ENCODE measurements at regions of chr12 and their contacts with region 1.

Region 1: DNA sequence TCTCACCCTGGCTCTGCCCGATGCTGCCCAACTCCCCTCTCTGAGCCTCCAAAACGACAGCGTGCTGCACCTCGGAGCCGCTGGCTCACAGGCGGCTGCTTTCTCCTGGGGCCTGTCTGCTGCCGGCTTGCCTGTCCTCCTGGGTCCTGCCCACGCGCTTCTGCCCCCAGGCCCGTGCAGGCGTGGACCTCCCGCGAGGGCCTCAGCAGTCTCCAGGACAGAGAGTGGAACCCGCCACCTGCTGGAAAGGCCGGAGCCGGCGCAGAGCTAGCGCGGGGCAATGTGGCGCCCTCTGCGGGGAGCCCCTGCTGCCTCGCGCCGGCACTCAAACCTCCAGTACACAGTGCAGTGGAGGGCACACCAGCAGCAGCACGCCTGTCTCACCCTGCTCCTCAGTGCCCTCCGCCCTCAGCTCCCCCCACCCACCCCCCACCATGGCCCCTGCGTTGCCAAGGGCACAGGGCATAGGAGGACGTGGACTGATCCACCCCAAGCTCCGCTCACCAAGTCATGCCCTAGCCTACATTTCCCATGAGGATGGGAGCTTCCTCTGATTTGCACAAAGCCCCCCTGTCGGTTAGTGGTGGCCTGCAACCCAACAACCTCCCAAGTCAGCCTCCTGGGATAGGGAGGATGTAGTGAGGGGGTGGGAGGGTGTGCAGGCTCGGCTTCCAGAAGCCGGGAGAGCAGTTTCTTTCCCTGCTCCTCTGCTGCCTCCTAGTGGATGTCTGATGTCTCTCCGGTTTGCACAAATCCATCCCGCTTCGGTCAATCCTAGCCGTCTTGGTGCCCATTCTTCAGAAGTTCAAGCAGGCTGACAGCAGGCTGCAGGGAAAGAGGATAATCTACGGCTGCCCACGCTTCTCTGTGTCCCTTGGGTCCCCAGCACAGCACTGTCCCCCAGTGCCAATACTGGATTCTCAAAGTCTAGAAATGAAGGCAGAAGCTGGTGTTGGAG is 25.2 kb downstream of the KRT8 start:
- DNase-seq: peak; percentile 91
- H3K4me3 ChIP-seq: peak overlapping the region in 7 of 8 donors; percentile 1 to 54 (median 18)
- H3K27ac ChIP-seq: peak overlapping the region in 1 of 8 donors; percentile 7
- H3K4me1 ChIP-seq: peaks cover 0 to 29% (median 15%) of the 10 kb centered on the region in 6 donors
- H3K27me3 ChIP-seq: peaks cover 0 to 56% (median 0%) of the 10 kb centered on the region in 7 donors
- CTCF ChIP-seq: peak; percentile 17 to 79 (median 67)
- POLR2A ChIP-seq: no peak

Region 2: GRCh38 chr12:52156736-52157565 is 722.7 kb before region 1 on chr12:
- intact Hi-C with region 1: loop called (anchors 5 kb)
- DNase-seq: peak; percentile 89
- H3K4me3 ChIP-seq: no peak overlapping the region
- H3K27ac ChIP-seq: no peak overlapping the region
- H3K4me1 ChIP-seq: peaks cover 2 to 10% (median 7%) of the 10 kb centered on the region in 6 donors
- H3K27me3 ChIP-seq: peaks cover 0 to 15% (median 7%) of the 10 kb centered on the region in 7 donors
- CTCF ChIP-seq: peak; percentile 70 to 95 (median 90)
- POLR2A ChIP-seq: no peak

Region 3: DNA sequence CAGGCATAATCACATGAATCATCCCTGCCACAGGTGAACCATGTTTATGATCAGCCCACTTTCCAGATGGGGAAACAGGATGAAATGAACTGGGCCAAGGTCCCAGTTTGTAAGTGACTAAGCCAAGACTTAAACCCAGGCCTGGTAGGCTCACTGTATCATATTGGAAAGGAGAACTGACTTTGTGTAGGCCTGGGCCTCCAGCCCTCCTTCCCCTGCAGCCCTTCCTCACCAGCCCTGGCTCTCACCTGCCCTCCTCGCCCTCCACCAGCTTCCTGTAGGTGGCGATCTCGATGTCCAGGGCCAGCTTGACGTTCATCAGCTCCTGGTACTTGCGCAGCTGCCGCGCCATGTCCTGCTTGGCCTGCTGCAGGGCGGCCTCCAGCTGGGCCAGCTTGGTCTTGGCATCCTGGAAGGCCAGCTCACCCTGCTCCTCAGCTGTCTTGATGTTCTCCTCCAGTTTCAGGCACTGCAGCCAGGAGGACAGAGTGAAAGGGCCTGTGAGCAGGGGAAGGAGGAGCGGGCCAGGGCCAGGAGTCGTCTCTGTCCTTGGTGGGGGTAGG is 707.6 kb before region 1 on chr12:
- intact Hi-C with region 1: loop called (anchors 5 kb)
- DNase-seq: no peak
- H3K4me3 ChIP-seq: no peak overlapping the region
- H3K27ac ChIP-seq: no peak overlapping the region
- H3K4me1 ChIP-seq: peaks cover 0 to 26% (median 1%) of the 10 kb centered on the region in 6 donors
- H3K27me3 ChIP-seq: no peaks in the 10 kb centered on the region
- CTCF ChIP-seq: peak in 1 of 11 experiments; percentile 26
- POLR2A ChIP-seq: no peak

Region 4: GRCh38 chr12:52372216-52373154 is 507.2 kb before region 1 on chr12:
- intact Hi-C with region 1: loop called (anchors 5 kb)
- DNase-seq: peak; percentile 82
- H3K4me3 ChIP-seq: no peak overlapping the region
- H3K27ac ChIP-seq: peak overlapping the region in 2 of 8 donors; percentile 43 to 46
- H3K4me1 ChIP-seq: peaks cover 0 to 12% (median 0%) of the 10 kb centered on the region in 6 donors
- H3K27me3 ChIP-seq: peaks cover 0 to 25% (median 0%) of the 10 kb centered on the region in 7 donors
- CTCF ChIP-seq: peak; percentile 36 to 78 (median 66)
- POLR2A ChIP-seq: no peak

Region 5: GRCh38 chr12:52582971-52583456 is 296.7 kb before region 1 on chr12:
- intact Hi-C with region 1: loop called (anchors 5 kb)
- DNase-seq: peak; percentile 71
- H3K4me3 ChIP-seq: no peak overlapping the region
- H3K27ac ChIP-seq: no peak overlapping the region
- H3K4me1 ChIP-seq: peaks cover 0 to 8% (median 0%) of the 10 kb centered on the region in 6 donors
- H3K27me3 ChIP-seq: peaks cover 0 to 24% (median 0%) of the 10 kb centered on the region in 7 donors
- CTCF ChIP-seq: peak in 10 of 11 experiments; percentile 31 to 77 (median 60)
- POLR2A ChIP-seq: no peak

Region 6: GRCh38 chr12:52662093-52662917 is 217.4 kb before region 1 on chr12:
- intact Hi-C with region 1: no loop called
- DNase-seq: no peak
- H3K4me3 ChIP-seq: no peak overlapping the region
- H3K27ac ChIP-seq: no peak overlapping the region
- H3K4me1 ChIP-seq: no peaks in the 10 kb centered on the region
- H3K27me3 ChIP-seq: peaks cover 0 to 24% (median 0%) of the 10 kb centered on the region in 7 donors
- CTCF ChIP-seq: no peak
- POLR2A ChIP-seq: no peak

Region 7: GRCh38 chr12:52847335-52848102 is 32.2 kb before region 1 on chr12:
- intact Hi-C with region 1: no loop called
- DNase-seq: peak; percentile 56
- H3K4me3 ChIP-seq: no peak overlapping the region
- H3K27ac ChIP-seq: no peak overlapping the region
- H3K4me1 ChIP-seq: no peaks in the 10 kb centered on the region
- H3K27me3 ChIP-seq: peaks cover 0 to 18% (median 0%) of the 10 kb centered on the region in 7 donors
- CTCF ChIP-seq: no peak
- POLR2A ChIP-seq: no peak

Measured in spleen (tissue), 13 donors.